AG04449 (cell line): ENCODE measurements at regions of chr7 and their contacts with region 1.

Region 1: GRCh38 chr7:28921822-28922221 is 36.3 kb downstream of the TRIL start:
- DNase-seq: no peak
- H3K4me3 ChIP-seq: no peak overlapping the region
- CTCF ChIP-seq: peak; percentile 78

Region 2: DNA sequence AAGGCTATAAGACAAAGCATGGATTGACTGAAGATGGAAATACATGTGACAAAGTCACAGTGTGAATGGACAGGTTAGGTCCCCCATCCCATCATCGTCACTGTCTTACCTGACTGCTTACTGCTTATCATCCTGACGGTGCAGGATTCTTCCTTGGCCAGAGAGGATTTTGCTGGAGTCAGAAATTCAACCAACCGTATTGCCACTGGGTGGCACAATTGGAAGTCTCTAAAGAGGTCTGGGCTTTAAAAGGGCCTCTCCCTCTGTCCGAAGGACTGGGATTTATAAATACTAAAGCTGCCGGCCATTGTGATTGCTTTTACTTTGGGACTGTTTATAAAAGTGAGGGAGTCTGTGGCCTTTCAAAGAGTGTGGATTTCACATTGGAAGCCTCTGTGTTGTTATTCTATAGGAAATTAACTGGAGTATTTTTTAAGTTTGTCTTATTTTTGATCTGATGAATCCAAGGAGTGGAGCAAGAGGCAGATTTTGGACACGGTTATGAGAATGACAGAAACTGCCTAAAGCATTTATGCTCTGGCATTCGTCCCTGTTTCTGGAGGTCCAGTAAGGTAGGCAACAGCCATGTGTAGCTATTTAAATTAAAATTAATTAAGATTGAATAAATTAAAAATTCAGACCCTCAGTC is 622.8 kb before region 1 on chr7:
- CTCF ChIA-PET with region 1: interaction called, 16 read pairs
- POLR2A ChIA-PET with region 1: no interaction called
- DNase-seq: no peak
- H3K4me3 ChIP-seq: no peak overlapping the region
- CTCF ChIP-seq: peak; percentile 52

Region 3: DNA sequence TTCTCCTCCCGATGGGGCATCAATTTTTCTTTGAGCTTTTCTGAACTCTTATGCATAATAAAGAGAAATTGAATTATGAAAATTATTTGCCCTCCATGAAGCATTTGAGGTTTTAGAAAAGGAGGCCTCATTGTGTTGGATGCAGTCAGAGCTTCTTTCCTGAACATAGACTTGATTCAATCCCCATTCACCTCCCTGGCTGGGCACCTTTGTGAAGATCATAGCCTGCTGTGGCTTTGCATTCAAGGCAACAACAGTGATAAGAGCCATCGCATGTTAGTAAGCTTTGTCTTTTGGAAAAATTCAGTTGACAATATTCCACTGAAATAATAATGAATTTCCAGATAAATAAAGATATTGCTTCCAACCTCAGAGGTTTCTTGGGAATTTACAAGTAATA is 50.7 kb before region 1 on chr7:
- CTCF ChIA-PET with region 1: interaction called, 10 read pairs
- POLR2A ChIA-PET with region 1: no interaction called
- DNase-seq: no peak
- H3K4me3 ChIP-seq: no peak overlapping the region
- CTCF ChIP-seq: no peak

Region 4: GRCh38 chr7:29119538-29120199 is 197.8 kb after region 1 on chr7:
- CTCF ChIA-PET with region 1: interaction called, 1,392 read pairs
- POLR2A ChIA-PET with region 1: no interaction called
- DNase-seq: no peak
- H3K4me3 ChIP-seq: no peak overlapping the region
- CTCF ChIP-seq: no peak

Region 5: GRCh38 chr7:29421010-29421956 is 499.5 kb after region 1 on chr7:
- CTCF ChIA-PET with region 1: interaction called, 20 read pairs
- POLR2A ChIA-PET with region 1: no interaction called
- DNase-seq: no peak
- H3K4me3 ChIP-seq: no peak overlapping the region
- CTCF ChIP-seq: no peak